ENCODE measurements at regions of chr16 and their contacts with region 1.

Region 1: GRCh38 chr16:82653550-82654511 is 27.1 kb downstream of the CDH13 start:
- DNase-seq: peak; percentile 39
- CTCF ChIP-seq: no peak

Region 2: DNA sequence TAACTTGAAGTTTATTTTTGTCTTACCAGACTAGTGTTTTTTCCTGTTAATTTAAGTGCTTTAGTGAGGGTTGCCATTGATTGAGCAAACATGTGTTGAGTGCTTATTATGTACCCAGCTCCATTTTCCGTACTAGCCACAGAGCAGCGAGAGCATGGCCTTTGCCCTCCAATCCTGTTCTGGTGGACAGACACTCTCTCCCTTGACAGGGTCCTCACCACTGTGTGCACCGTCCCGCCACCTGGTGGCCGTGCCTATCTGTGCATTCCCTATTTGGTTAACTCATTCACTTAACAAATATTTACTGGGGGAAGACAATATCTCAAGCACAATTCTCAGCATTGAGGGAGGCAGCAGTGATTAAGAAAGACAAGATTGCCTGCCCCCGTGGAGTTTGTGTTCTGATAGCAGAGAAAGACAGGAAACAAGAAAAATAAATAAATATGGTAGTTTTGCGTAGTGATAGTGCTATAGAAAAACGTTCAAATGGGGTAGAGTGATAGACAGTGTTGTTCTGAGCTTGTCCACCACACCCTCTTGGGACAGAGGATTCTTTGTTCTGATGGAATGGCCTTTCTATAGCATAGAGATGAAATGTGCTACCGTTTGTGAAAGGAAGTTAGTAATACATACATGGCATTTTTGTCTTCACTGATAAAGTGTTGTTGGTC is 14.0 kb before region 1 on chr16:
- CTCF ChIA-PET with region 1: interaction called, 84 read pairs
- POLR2A ChIA-PET with region 1: no interaction called
- DNase-seq: peak; percentile 54
- CTCF ChIP-seq: peak; percentile 83